Transverse colon (tissue), 4 donors: ENCODE measurements at regions of chrX and their contacts with region 1.

Region 1: DNA sequence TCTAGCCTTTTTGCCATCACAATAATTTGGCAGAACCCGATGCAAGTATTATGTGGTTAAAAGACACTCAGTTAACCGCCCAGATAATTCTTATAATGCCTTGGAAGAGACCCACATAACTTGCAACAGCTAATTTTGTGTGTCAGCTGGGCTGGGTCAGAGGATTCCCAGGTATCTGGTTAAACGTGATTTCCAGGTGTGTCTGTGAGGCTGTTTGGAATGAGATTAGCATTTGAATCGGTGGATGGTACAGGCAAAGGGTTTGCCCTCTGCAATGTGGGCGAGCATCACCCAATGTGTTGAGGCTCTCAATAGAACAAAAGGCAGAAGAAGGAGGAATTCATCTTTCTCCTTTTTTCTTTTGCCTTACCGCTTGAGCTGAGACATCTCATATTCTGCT is 314.2 kb upstream of the PUDP start:
- DNase-seq: no peak
- H3K4me3 ChIP-seq: no peak overlapping the region
- H3K27ac ChIP-seq: no peak overlapping the region
- H3K4me1 ChIP-seq: no peaks in the 10 kb centered on the region
- H3K27me3 ChIP-seq: no peaks in the 10 kb centered on the region
- CTCF ChIP-seq: no peak
- EP300 ChIP-seq: no peak
- POLR2A ChIP-seq: no peak

Region 2: GRCh38 chrX:6067600-6067999 is 1394.5 kb before region 1 on chrX:
- in situ Hi-C with region 1: no loop called
- intact Hi-C with region 1: loop called (anchors 5 kb)
- DNase-seq: no peak
- H3K4me3 ChIP-seq: no peak overlapping the region
- H3K27ac ChIP-seq: no peak overlapping the region
- H3K4me1 ChIP-seq: no peaks in the 10 kb centered on the region
- H3K27me3 ChIP-seq: no peaks in the 10 kb centered on the region
- CTCF ChIP-seq: no peak
- EP300 ChIP-seq: no peak
- POLR2A ChIP-seq: no peak

Region 3: DNA sequence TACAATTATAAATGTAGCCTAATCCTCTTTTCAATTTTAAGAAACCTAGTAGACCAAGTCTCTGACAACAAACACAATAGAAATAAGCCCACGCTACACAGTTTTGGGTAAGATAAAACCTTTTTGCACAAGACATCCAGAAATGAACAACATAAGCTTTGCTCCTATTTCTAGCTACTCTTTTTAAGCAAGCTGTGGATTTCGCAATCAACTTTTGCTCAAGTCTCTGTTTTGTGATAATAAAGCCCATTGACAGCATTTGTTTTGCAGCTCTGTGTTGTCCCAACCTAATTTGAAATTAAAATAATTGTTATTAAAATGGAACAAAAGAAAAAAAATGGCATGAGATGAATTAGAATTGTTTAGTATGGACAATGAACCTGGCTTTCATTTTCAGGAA is 26.3 kb before region 1 on chrX:
- in situ Hi-C with region 1: no loop called
- intact Hi-C with region 1: no loop called
- DNase-seq: no peak
- H3K4me3 ChIP-seq: no peak overlapping the region
- H3K27ac ChIP-seq: no peak overlapping the region
- H3K4me1 ChIP-seq: no peaks in the 10 kb centered on the region
- H3K27me3 ChIP-seq: no peaks in the 10 kb centered on the region
- CTCF ChIP-seq: no peak
- EP300 ChIP-seq: no peak
- POLR2A ChIP-seq: no peak